ENCODE measurements at regions of chr9 and their contacts with region 1.

Region 1: GRCh38 chr9:125746017-125746773 is 978 bp upstream of the PBX3 start:
- DNase-seq: peak; percentile 95 to 97
- ATAC-seq: peak; percentile 97 to 99 (median 97)
- H3K4me3 ChIP-seq: peak overlapping the region; percentile 79
- H3K27ac ChIP-seq: peak overlapping the region; percentile 70
- H3K4me1 ChIP-seq: peaks cover 14% of the 10 kb centered on the region
- H3K27me3 ChIP-seq: peaks cover 0 to 21% (median 6%) of the 10 kb centered on the region in 3 donors
- CTCF ChIP-seq: no peak

Region 2: GRCh38 chr9:125558453-125559092 is 187.6 kb before region 1 on chr9:
- intact Hi-C with region 1: loop called (anchors 5 to 10 kb)
- DNase-seq: no peak
- ATAC-seq: peak; percentile 61 to 82 (median 73)
- H3K4me3 ChIP-seq: no peak overlapping the region
- H3K27ac ChIP-seq: no peak overlapping the region
- H3K4me1 ChIP-seq: peaks cover 12% of the 10 kb centered on the region
- H3K27me3 ChIP-seq: no peaks in the 10 kb centered on the region
- CTCF ChIP-seq: peak; percentile 74

Region 3: DNA sequence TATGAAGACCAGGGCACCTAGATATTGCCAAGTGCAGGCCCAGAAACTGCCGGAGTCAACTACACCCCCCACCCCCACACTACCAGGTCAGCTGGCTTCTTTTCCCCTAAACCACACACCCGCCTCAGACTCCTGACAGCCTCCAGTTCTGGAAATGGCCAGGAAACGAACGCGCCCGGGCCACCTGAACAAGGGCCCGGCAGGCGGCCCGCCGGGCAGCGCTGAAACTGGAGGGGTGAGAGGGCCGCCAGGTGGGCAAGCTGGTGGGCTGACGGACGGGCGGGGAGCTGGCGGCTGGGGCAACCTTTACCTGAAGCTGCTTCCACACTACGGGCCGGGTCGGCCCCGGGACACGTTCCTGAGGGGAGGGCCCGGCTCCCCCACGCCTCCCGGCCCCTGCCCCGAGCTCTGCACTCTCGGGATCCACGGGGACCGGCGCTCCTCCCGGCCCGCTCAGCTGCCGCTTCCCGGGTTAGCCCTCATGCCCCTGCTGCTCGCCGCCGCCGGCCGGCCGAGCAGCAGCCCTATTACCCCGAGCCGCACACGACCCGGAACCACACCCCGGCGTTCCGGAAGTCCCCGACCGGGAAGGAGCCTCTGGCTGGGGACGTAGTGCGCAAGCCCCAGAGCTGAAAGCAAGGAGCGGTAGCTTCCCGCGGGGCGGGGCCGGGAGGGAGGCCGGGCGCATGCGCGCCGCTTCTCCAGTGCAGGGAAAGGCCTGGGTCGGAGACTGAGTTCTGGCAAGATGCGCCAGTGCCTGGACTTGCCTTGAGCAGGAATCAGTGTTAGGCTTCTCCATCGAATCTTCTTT is 39.3 kb before region 1 on chr9 and contains the start of gene MAPKAP1:
- intact Hi-C with region 1: loop called (anchors 2 to 5 kb)
- DNase-seq: peak; percentile 99
- ATAC-seq: peak; percentile 100
- H3K4me3 ChIP-seq: peak within 1 kb of the TSS; percentile 93
- H3K27ac ChIP-seq: peak within 1 kb of the TSS; percentile 84
- H3K4me1 ChIP-seq: peaks cover 21% of the 10 kb centered on the region
- H3K27me3 ChIP-seq: no peaks in the 10 kb centered on the region
- CTCF ChIP-seq: no peak
- total RNA-seq, gene MAPKAP1: 64.2 to 110 (median 89.9) TPM

Region 4: DNA sequence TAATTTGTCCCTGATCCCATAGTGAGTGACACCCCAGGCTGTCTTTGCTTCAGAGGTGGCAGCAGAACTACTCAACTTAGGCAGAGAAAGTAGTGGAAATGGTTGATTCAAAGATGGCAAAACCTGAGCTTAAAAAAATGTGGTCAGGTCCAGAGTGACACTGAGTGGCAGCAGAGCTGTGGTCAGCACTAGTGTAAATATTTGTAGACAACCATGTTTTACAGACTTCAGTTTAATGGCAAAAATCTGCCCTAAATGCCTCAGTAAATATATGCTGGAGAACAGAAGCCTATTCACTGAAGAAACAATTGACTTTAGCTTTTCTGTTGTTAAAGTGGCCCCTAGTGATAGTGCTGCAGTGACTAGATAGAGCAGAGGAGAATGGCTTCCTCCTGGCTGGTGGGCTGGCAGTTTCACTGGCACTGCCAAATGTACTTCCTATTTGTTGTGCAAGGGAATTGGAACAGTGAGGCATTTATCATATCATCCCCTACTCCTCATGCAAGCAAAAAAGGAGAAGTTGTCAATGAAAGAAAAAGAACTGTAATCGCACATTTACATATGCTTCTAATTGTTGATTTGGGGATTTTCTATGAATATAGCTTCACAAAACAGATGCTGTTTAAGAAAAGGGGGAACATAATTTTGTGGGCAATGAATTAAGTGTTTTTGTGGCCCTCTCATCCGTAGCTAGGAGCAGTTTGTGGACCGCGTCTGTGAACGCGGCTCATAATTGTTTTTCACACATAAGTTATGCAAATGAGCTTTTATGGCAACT is 13.0 kb after region 1 on chr9:
- intact Hi-C with region 1: no loop called
- DNase-seq: no peak
- ATAC-seq: no peak
- H3K4me3 ChIP-seq: peak overlapping the region; percentile 20
- H3K27ac ChIP-seq: no peak overlapping the region
- H3K4me1 ChIP-seq: no peaks in the 10 kb centered on the region
- H3K27me3 ChIP-seq: no peaks in the 10 kb centered on the region
- CTCF ChIP-seq: no peak

Region 5: DNA sequence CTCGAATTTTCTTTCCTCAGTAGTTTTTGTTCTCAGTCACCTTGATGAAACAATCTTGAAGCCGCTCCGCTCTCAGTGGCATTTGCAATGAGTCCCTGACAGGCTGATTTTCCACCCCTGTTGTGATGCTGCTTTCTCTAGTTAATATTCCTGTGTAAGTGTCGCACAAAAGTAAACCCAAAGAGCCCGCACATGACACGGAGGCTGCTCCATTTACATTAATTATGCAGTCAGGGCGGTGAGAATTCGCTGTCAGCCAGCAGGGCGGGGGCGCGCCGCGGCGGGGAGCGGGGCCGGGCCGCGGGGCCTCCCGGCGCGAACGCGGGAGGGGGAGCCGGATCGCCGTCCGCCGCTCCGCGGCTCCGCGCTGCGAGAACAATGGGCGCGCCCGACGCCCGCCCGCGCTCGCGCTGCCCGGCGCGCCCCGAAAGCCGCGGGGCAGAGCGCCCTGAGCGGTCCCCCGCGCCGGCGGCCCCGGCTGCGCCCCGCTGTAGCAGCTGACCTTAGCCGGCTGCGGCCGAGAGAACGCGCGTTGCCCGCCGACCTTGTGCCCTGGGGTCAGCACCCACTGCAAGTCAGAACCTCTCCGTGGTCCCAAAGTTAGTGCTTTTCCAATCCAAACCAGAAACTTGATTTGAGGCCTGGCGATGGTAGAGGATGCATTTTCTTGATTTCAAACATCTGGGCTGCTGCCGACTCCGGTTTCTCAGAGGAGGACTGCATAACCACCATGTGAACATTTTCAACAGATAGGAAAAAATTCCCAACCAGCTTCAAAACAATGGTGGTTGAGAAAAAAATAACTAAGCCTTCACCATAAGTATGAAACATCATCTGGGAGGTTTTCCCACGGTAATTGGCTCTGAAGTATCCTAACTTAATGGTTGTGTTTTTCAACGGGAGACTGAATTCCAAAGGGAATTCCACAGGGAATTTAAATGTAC is 143.6 kb after region 1 on chr9:
- intact Hi-C with region 1: loop called in 1 of 2 experiments (anchors 5 kb)
- DNase-seq: peak; percentile 25 to 50
- ATAC-seq: peak in 2 of 4 donors; percentile 63 to 81
- H3K4me3 ChIP-seq: peak overlapping the region; percentile 64
- H3K27ac ChIP-seq: no peak overlapping the region
- H3K4me1 ChIP-seq: no peaks in the 10 kb centered on the region
- H3K27me3 ChIP-seq: no peaks in the 10 kb centered on the region
- CTCF ChIP-seq: no peak